Activated CD4-positive, alpha-beta T cell treated with anti-CD3 and anti-CD28 coated beads for 36 hours (primary cell): ENCODE measurements at regions of chr5 and their contacts with region 1.

Region 1: GRCh38 chr5:141641634-141642267 is 5.0 kb downstream of the RELL2 start:
- DNase-seq: peak; percentile 42
- ATAC-seq: peak; percentile 63
- H3K4me3 Mint-ChIP-seq: no peak overlapping the region
- H3K27ac Mint-ChIP-seq: peak overlapping the region; percentile 2
- H3K4me1 Mint-ChIP-seq: peaks cover 22% of the 10 kb centered on the region
- H3K27me3 Mint-ChIP-seq: no peaks in the 10 kb centered on the region

Region 2: DNA sequence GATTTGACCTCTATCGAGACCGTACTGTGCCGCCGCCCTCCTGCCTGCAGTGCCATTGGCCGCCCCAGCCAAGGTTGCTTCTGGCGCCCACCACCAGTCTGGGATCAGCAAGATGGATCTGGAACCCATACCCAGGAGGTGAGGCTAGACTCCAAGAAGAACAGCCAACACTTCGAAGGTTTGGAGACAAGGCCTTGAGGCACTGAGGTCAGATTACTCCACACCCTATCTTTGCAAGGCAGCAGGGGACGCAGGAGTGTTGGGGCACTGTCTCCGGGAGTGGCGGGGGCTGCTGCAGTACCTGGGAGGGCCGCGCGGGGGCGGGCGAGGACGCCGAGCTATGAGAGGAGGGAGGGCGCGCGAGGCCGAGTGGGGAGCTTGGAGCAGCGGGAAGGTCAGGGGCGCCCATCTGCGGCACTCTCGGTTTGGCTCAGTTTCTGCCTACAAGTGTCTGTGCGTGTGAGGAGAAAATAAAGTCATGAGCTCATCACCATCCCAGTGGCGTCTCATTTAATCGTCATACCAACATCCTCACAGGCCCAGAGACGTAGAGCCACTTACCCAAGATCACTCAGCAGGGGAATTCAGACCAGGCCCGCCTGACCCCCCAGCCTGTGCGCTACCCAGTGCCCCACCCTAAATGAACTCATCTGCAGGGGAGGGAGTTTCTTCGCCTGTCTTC is 1866.6 kb before region 1 on chr5:
- CTCF ChIA-PET with region 1: no interaction called
- POLR2A ChIA-PET with region 1: no interaction called
- intact Hi-C with region 1: no loop called
- DNase-seq: peak; percentile 92
- ATAC-seq: peak; percentile 95
- H3K4me3 Mint-ChIP-seq: no peak overlapping the region
- H3K27ac Mint-ChIP-seq: peak overlapping the region; percentile 58
- H3K4me1 Mint-ChIP-seq: peaks cover 10% of the 10 kb centered on the region
- H3K27me3 Mint-ChIP-seq: peaks cover 9% of the 10 kb centered on the region

Region 3: GRCh38 chr5:141630570-141631140 is 11.1 kb before region 1 on chr5:
- CTCF ChIA-PET with region 1: interaction called, 12 read pairs
- POLR2A ChIA-PET with region 1: interaction called, 4 read pairs
- intact Hi-C with region 1: no loop called
- DNase-seq: no peak
- ATAC-seq: no peak
- H3K4me3 Mint-ChIP-seq: no peak overlapping the region
- H3K27ac Mint-ChIP-seq: no peak overlapping the region
- H3K4me1 Mint-ChIP-seq: peaks cover 24% of the 10 kb centered on the region
- H3K27me3 Mint-ChIP-seq: no peaks in the 10 kb centered on the region

Region 4: DNA sequence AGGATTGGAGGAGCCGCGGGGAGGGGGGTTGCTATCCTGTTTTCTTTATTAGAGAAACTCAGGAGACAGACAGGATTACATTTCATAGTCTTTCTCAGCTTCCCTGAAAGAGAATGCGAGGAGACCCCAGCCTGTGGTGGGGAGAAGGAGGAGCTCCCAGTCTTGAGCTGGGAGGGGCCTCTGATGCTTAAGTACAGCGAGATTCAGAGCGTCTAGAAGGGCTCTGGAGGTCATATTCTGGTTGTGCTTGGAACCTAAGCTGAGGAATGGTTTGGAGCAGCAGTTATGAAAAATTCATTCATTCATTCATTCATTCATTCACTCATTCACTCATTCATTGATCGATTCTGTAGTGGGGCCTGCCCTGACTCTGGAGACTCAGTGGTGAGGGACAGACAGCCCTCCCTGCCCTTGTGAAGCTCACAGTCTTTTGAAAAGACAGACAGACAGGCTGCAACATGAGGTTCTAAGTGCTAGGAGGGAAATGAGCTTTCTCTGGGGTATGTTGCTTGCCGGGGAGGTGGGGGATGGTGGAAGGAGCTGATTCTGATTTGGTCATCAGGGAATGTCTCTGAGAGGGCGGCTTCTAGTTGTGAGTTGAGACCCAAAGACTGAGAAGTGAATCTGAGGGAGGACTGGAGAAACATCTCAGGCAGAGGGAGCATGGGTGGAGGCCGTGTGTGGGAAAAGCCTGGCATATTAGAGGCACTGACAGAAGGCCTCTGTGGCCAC is 685.5 kb after region 1 on chr5:
- CTCF ChIA-PET with region 1: no interaction called
- POLR2A ChIA-PET with region 1: no interaction called
- intact Hi-C with region 1: no loop called
- DNase-seq: no peak
- ATAC-seq: no peak
- H3K4me3 Mint-ChIP-seq: no peak overlapping the region
- H3K27ac Mint-ChIP-seq: no peak overlapping the region
- H3K4me1 Mint-ChIP-seq: peaks cover 22% of the 10 kb centered on the region
- H3K27me3 Mint-ChIP-seq: peaks cover 31% of the 10 kb centered on the region